ENCODE measurements at regions of chr17 and their contacts with region 1.

Region 1: GRCh38 chr17:41966463-41967140 is at the start of gene CNP:
- DNase-seq: peak; percentile 95
- ATAC-seq: peak; percentile 93
- total RNA-seq, gene CNP: 393 TPM

Region 2: DNA sequence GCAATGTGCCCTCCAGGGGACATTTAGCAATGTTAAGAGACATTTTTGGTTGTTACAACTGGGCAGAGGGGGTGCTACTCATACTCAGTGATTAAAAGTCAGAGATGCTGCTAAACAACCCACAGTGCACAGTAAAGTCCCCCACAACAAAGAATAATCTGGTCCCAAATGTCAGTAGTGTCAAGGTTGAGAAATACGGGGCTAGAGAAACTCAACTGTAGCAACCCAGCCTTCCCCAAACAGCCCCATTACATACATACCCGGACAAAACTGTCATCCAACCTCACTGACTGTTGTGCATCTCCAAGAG is 30.2 kb after region 1 on chr17:
- intact Hi-C with region 1: no loop called
- DNase-seq: no peak
- ATAC-seq: no peak

Region 3: DNA sequence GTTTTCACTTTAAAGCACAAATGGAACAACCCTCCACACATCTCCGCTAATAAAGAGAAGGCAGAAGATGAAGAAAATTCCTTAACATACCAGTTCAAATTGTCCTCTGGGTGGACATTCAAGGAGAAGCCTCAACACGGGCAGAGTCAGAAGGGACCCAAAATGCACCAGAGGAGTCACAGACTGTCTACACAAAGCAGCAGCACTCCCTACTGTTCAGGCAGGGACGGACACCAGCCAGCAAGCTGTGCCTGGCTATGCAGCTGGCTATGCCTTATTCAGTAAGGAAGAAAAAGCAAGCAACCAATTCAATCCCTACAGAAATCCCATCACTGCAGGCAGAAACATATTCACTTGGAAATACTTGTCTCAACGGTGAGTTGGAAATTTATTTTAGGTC is 42.6 kb after region 1 on chr17:
- intact Hi-C with region 1: loop called (anchors 2 kb)
- DNase-seq: peak; percentile 62
- ATAC-seq: peak; percentile 71